ENCODE measurements at regions of chr1 and their contacts with region 1.

Region 1: GRCh38 chr1:112619520-112620376 is at the start of gene CAPZA1:
- DNase-seq: peak; percentile 76
- ATAC-seq: peak; percentile 98
- H3K4me3 ChIP-seq: peak within 1 kb of the TSS; percentile 88 to 94 (median 92)
- H3K27ac ChIP-seq: peak within 1 kb of the TSS; percentile 95
- H3K4me1 ChIP-seq: peaks cover 32% of the 10 kb centered on the region
- H3K27me3 ChIP-seq: no peaks in the 10 kb centered on the region; a peak in 2 of 5 replicates
- CTCF ChIP-seq: peak; percentile 28; the same call in 1 of the 2 replicates
- EP300 ChIP-seq: peak in 1 of 2 experiments; percentile 16; a peak in 1 of 4 replicates
- POLR2A ChIP-seq: peak; percentile 79 to 92
- RAD21 ChIP-seq: no peak
- total RNA-seq, gene CAPZA1: 117 and 210 TPM in 2 replicates

Region 2: DNA sequence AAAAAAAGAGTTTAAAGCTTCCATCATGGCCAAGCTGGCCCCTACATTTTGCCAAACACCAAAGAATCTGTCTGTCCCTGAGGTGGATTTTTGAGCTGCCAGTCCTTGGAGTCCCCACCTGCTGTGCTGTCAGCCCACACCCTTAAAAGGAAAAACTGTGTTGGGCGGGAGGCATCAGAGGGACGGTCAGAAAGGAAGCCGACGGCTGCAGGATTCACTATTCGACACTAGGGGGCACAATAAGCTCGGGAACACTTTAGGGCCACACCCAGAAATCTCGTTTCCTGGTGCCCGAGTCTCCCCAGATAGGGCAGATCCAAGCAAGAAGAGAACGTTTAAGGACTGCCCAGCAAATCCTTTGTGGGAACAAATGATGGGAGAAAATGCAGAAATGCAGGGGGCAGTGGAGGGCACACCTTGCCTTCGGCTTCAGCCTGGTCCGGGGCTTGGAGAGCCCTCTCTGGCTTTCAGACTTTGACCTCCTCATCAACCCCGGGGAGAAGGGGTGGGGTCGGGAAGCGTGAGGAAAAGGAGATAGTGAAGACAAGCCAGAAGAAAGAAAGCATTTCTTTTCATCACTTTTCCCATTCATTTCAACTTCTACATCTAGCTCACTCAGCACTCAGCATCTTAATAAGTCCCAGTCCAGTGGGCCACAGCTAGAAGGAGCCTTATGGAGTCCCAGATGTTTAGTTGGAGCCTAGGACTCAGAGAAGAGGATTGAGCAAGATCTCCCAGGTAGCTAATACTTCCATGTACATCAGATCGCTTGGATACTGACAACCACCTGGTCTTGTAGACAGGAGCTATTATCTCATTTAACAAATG is 228.8 kb before region 1 on chr1:
- CTCF ChIA-PET with region 1: interaction called, 5 read pairs
- POLR2A ChIA-PET with region 1: interaction called, 3 read pairs
- in situ Hi-C with region 1: loop called (anchors 5 kb)
- intact Hi-C with region 1: loop called (anchors 1 kb)
- DNase-seq: peak; percentile 88
- ATAC-seq: peak; percentile 76
- H3K4me3 ChIP-seq: peak overlapping the region; percentile 48 to 74 (median 56)
- H3K27ac ChIP-seq: no peak overlapping the region
- H3K4me1 ChIP-seq: peaks cover 71% of the 10 kb centered on the region
- H3K27me3 ChIP-seq: no peaks in the 10 kb centered on the region
- CTCF ChIP-seq: peak; percentile 95
- EP300 ChIP-seq: no peak
- POLR2A ChIP-seq: no peak
- RAD21 ChIP-seq: peak; percentile 87

Region 3: DNA sequence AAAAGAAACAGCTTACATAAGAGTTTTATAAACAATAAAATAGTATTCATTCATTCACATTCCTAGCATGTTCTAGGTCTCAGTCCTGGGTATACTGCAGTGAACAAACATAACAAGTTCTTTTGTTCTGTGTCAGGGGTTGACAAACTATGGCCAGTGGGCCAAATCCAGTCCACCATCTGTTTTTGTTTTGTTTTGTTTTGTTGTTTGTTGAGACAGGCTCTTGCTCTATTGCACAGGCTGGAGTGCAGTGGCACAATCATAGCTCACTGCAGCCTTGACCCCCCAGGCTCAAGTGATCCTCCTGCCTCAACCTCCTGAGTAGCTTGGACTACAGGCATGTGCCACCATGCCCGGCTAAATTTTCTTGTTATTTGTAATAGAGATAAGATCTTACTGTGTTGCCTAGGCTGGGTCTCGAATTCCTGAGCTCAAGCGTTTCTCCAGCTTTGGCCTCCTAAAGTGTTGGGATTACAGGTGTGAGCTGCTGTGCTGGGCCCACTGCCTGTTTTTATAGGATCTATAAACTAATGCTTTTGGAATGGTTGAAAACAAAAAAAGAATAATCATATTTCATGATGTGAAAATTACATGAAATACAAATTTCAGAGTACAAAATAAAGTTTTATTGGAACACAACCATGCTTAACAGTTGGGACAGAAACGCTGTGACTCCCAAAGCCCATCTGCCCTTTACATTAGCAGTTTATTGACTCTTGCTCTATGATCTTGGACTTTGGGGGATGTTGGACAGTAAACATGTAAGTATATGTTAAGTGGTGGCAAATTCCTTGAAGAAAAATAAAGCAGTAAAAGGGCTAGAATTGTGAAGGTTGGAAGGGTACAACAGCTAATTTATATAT is 17.7 kb after region 1 on chr1:
- CTCF ChIA-PET with region 1: no interaction called
- POLR2A ChIA-PET with region 1: interaction called, 13 read pairs
- in situ Hi-C with region 1: no loop called
- intact Hi-C with region 1: no loop called
- DNase-seq: peak; percentile 80
- ATAC-seq: peak; percentile 84
- H3K4me3 ChIP-seq: no peak overlapping the region; a peak in 1 of 6 replicates
- H3K27ac ChIP-seq: peak overlapping the region; percentile 64
- H3K4me1 ChIP-seq: peaks cover 78% of the 10 kb centered on the region
- H3K27me3 ChIP-seq: no peaks in the 10 kb centered on the region
- CTCF ChIP-seq: no peak
- EP300 ChIP-seq: no peak
- POLR2A ChIP-seq: no peak
- RAD21 ChIP-seq: no peak

Region 4: GRCh38 chr1:112674439-112674985 is 54.8 kb after region 1 on chr1 and contains the start of gene MOV10:
- CTCF ChIA-PET with region 1: no interaction called
- POLR2A ChIA-PET with region 1: interaction called, 24 read pairs
- in situ Hi-C with region 1: no loop called
- intact Hi-C with region 1: loop called (anchors 2 kb)
- DNase-seq: peak; percentile 67
- ATAC-seq: peak; percentile 87
- H3K4me3 ChIP-seq: peak within 1 kb of the TSS; percentile 82 to 91 (median 83)
- H3K27ac ChIP-seq: peak within 1 kb of the TSS; percentile 90
- H3K4me1 ChIP-seq: peaks cover 49% of the 10 kb centered on the region
- H3K27me3 ChIP-seq: no peaks in the 10 kb centered on the region; a peak in 1 of 5 replicates
- CTCF ChIP-seq: peak; percentile 35
- EP300 ChIP-seq: 0 out of 4 replicates have a peak, but pooled peaks of 1 of the 2 experiments have one; percentile 16
- POLR2A ChIP-seq: peak in 1 of 2 experiments; percentile 75; a peak in 3 of 4 replicates
- RAD21 ChIP-seq: no peak
- total RNA-seq, gene MOV10: 38.0 and 56.4 TPM in 2 replicates

Region 5: DNA sequence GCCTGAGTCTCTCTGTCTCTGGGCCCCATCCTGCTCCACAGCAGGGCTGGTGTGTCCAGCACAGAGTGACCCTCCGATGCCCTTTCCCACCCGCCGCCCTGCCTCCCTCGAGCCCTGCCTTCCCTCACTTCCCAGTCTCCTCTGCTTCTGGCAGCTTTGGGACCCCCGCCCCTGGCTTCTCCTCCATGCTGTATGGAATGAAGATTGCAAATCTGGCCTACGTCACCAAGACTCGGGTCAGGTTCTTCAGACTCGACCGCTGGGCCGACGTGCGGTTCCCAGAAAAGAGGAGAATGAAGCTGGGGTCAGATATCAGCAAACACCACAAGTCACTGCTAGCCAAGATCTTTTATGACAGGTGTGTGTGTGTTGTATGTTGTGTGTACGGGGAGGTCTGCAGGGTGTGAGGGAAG is 69.0 kb after region 1 on chr1:
- CTCF ChIA-PET with region 1: no interaction called
- POLR2A ChIA-PET with region 1: no interaction called
- in situ Hi-C with region 1: no loop called
- intact Hi-C with region 1: no loop called
- DNase-seq: no peak
- ATAC-seq: no peak
- H3K4me3 ChIP-seq: no peak overlapping the region
- H3K27ac ChIP-seq: no peak overlapping the region
- H3K4me1 ChIP-seq: no peaks in the 10 kb centered on the region
- H3K27me3 ChIP-seq: no peaks in the 10 kb centered on the region
- CTCF ChIP-seq: no peak
- EP300 ChIP-seq: no peak
- POLR2A ChIP-seq: no peak
- RAD21 ChIP-seq: no peak

Region 6: GRCh38 chr1:112700290-112701226 is 80.8 kb after region 1 on chr1:
- CTCF ChIA-PET with region 1: no interaction called
- POLR2A ChIA-PET with region 1: interaction called, 23 read pairs
- in situ Hi-C with region 1: loop called (anchors 5 kb)
- intact Hi-C with region 1: no loop called
- DNase-seq: peak; percentile 90
- ATAC-seq: peak; percentile 58
- H3K4me3 ChIP-seq: peak overlapping the region in 1 of 3 experiments; percentile 26; a peak in 1 of 6 replicates
- H3K27ac ChIP-seq: peak overlapping the region; percentile 93
- H3K4me1 ChIP-seq: peaks cover 81% of the 10 kb centered on the region
- H3K27me3 ChIP-seq: no peaks in the 10 kb centered on the region; a peak in 1 of 5 replicates
- CTCF ChIP-seq: peak; percentile 38
- EP300 ChIP-seq: 0 out of 4 replicates have a peak, but pooled peaks of 1 of the 2 experiments have one; percentile 15
- POLR2A ChIP-seq: 0 out of 4 replicates have a peak, but pooled peaks of 1 of the 2 experiments have one; percentile 20
- RAD21 ChIP-seq: no peak